Left lung (tissue), 14 donors: ENCODE measurements at regions of chr12 and their contacts with region 1.

Region 1: GRCh38 chr12:70719672-70720420 is 82.6 kb upstream of the PTPRB start:
- DNase-seq: peak; percentile 34 to 71 (median 68)
- ATAC-seq: peak; percentile 91
- H3K4me3 ChIP-seq: no peak overlapping the region
- H3K27ac ChIP-seq: peak overlapping the region in 1 of 2 donors; percentile 7
- H3K4me1 ChIP-seq: peaks cover 0 to 6% of the 10 kb centered on the region in 2 donors
- H3K27me3 ChIP-seq: no peaks in the 10 kb centered on the region
- CTCF ChIP-seq: peak; percentile 75 to 94

Region 2: GRCh38 chr12:70590051-70590450 is 129.8 kb before region 1 on chr12:
- intact Hi-C with region 1: loop called in 1 of 2 experiments (anchors 5 kb)
- DNase-seq: peak in 3 of 4 donors; percentile 54 to 71 (median 61)
- ATAC-seq: peak; percentile 97
- H3K4me3 ChIP-seq: no peak overlapping the region
- H3K27ac ChIP-seq: no peak overlapping the region
- H3K4me1 ChIP-seq: no peaks in the 10 kb centered on the region
- H3K27me3 ChIP-seq: no peaks in the 10 kb centered on the region
- CTCF ChIP-seq: peak; percentile 65 to 76